HEK293T (cell line): ENCODE measurements at regions of chr1 and their contacts with region 1.

Region 1: DNA sequence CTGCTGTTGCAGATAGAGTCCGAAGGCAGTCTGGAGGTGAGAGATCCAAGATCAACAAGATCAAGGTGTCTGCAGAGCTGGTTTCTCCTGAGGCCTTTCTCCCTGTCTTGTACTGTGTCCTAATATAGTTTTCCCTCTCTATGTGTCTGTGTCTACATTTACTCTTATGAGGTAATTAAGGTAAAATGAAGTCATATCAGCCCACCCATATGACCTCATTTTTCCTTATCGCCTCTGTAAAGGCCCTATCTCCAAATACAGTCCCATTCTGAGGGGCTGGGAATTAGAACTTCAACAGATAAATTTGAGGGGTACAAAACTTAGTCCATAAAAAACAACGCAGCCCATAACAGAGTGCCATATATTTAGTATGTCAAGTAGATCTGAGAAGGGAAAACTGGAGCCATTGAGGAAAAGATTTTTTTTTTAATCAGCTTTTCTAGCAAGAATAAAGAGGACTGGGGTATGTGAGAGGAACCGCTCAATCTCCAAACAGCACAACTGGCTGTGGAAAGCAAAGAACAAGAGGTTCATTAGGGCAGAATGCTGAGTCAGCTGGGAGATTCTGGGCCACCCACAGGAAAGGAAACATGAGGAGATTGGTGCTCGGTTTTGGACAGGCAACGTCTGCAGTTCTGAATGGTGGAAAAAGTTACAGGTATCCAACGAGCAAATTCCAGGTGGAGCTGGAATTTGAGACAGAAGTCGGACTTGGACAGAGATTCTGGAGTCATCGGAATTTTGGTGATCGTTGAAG is 65.7 kb downstream of the MAP3K21 start:
- DNase-seq: no peak

Region 2: GRCh38 chr1:233473549-233474204 is 80.4 kb after region 1 on chr1:
- CTCF ChIA-PET with region 1: no interaction called
- POLR2A ChIA-PET with region 1: no interaction called
- DNase-seq: no peak

Region 3: GRCh38 chr1:233554037-233554436 is 160.8 kb after region 1 on chr1:
- CTCF ChIA-PET with region 1: interaction called, 10 read pairs
- POLR2A ChIA-PET with region 1: no interaction called
- DNase-seq: no peak